PC-9 (cell line): ENCODE measurements at regions of chr3 and their contacts with region 1.

Region 1: GRCh38 chr3:129233538-129233937 is 15.9 kb upstream of the COPG1 start:
- DNase-seq: no peak
- H3K4me3 ChIP-seq: no peak overlapping the region
- H3K27ac ChIP-seq: no peak overlapping the region
- H3K4me1 ChIP-seq: peaks cover 41% of the 10 kb centered on the region
- H3K27me3 ChIP-seq: no peaks in the 10 kb centered on the region
- CTCF ChIP-seq: no peak

Region 2: DNA sequence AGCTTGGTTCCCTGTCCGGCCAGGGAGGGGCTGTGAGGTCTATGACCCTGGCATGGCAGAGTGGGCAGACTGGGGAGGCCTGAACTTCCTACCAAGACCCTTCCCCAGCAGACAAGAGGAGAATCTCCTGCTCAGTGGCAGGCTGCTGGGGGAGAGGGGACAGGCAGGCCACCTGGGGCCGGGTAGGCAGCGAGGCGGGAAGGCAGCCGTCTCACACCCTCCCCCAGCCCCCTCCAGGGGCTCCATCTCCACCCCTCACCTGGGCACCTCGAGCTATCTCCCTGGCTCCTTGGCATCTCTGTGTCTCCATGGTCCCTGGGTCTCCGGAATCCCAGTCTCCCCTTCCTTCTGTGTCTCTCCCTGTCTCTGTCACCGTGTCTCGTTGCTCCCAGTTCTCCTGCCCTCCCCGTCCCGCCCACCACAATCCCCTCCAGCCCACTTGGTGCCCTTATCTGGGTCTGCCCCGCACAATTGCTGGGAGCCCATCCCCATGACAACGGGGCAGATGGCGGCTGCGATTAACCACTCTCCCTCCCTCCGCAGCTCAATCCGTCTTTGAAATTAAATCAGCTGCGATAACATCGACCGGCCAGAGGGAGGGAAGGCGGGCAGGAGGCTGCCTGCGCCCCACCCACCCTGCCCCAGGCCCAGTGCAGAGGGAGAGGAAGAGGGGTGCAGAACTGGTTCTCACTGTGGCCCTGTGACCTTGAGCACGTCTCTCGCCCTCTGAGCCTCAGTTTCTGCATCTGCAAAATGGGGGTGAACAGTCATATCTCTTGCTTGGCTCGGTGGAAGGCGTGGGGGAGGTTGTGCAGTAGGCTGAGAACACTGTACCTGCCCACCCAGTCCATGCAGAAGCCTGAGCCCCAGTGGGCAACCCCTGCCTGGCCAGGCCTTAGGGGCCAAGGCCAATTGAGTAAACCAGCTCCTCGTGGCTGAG is 776.5 kb before region 1 on chr3:
- CTCF ChIA-PET with region 1: no interaction called
- POLR2A ChIA-PET with region 1: interaction called, 12 read pairs
- intact Hi-C with region 1: no loop called
- DNase-seq: no peak
- H3K4me3 ChIP-seq: no peak overlapping the region
- H3K27ac ChIP-seq: no peak overlapping the region
- H3K4me1 ChIP-seq: peaks cover 12% of the 10 kb centered on the region
- H3K27me3 ChIP-seq: no peaks in the 10 kb centered on the region
- CTCF ChIP-seq: no peak

Region 3: DNA sequence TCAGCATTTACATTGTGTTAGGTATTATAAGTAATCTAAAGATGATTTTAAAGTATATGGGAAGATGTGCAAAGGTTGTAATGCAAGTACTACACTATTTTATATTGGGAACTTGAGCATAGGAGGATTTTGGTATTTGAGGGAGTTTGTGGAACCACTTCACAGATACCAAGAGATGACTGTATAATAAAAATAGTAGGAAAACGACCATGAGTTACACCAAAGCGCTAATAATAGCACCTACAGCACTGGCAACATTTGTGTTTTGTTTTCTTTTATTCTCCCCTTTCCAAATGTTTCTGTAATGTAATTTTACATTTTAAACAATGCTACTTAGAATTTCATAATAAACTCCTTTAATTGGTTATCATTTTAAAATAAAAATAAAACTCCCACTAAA is 60.3 kb before region 1 on chr3:
- CTCF ChIA-PET with region 1: no interaction called
- POLR2A ChIA-PET with region 1: no interaction called
- intact Hi-C with region 1: no loop called
- DNase-seq: no peak
- H3K4me3 ChIP-seq: no peak overlapping the region
- H3K27ac ChIP-seq: no peak overlapping the region
- H3K4me1 ChIP-seq: no peaks in the 10 kb centered on the region
- H3K27me3 ChIP-seq: no peaks in the 10 kb centered on the region
- CTCF ChIP-seq: no peak

Region 4: GRCh38 chr3:129195731-129196256 is 37.7 kb before region 1 on chr3:
- CTCF ChIA-PET with region 1: no interaction called
- POLR2A ChIA-PET with region 1: no interaction called
- intact Hi-C with region 1: no loop called
- DNase-seq: peak; percentile 57 to 84
- H3K4me3 ChIP-seq: peak overlapping the region; percentile 10; the same call in 1 of the 2 replicates
- H3K27ac ChIP-seq: peak overlapping the region; percentile 71
- H3K4me1 ChIP-seq: peaks cover 32% of the 10 kb centered on the region
- H3K27me3 ChIP-seq: no peaks in the 10 kb centered on the region
- CTCF ChIP-seq: no peak

Region 5: DNA sequence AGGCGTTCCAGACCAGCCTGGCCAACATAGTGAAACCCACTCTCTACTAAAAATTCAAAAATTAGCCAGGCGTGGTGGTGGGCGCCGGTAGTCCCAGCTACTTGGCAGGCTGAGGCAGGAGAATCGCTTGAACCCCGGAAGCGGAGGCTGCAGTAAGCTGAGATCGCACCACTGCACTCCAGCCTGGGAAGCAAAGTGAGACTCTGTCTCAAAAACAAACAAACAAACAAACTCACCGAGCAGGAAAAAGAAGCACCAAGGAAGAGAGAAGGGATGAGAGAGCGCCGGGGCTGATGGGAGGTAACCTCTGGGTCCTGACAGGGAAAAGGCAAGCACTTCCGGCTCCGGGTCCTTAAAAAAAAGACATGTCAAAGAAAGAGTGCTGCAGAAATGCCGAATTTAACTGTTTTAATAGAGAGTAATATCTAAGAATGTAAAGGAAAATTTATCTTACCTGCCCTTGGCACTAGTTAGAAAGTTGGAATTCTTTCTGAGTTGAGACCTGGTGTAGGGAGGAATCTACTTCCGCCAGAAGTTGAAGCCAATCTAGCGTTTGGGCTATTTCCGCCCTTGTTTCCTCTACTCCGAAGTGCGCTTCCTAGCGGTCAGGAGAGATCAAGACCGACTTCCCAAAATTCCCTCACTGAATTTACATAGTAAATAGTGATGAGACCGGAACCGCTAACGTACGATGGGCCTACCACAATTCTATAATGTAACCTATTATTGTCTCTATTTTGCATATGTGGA is 165.8 kb after region 1 on chr3:
- CTCF ChIA-PET with region 1: no interaction called
- POLR2A ChIA-PET with region 1: no interaction called
- intact Hi-C with region 1: no loop called
- DNase-seq: peak; percentile 81 to 88
- H3K4me3 ChIP-seq: peak overlapping the region; percentile 81
- H3K27ac ChIP-seq: peak overlapping the region; percentile 56
- H3K4me1 ChIP-seq: peaks cover 9% of the 10 kb centered on the region
- H3K27me3 ChIP-seq: no peaks in the 10 kb centered on the region
- CTCF ChIP-seq: peak; percentile 54